Tibial artery (tissue), 4 donors: ENCODE measurements at regions of chr2 and their contacts with region 1.

Region 1: DNA sequence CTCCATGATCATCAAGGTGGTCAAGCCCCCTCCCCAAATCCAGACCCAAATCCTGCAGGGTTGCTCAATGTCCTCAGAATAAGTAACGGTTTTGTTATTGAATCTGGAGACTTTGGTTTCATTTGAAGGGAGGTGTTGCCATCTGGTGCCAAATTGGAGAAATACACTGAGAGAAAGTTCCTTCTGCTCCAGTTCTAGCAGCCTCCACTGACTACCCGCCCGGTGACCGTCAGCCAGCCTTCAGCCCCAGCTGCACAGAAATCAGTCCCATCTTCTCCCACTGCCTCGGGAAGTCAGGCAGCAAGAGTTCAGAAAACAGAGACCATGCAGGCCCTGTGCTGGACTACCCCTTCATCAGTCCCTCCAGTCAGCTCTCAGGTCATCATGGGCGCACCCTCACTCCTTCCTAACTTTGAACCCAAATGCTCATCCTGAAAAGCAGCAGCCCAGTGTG is 38.7 kb downstream of the PKDCC start:
- DNase-seq: peak in 1 of 2 donors; percentile 30
- H3K4me3 ChIP-seq: no peak overlapping the region
- H3K27ac ChIP-seq: no peak overlapping the region
- H3K4me1 ChIP-seq: peaks cover 5 to 27% (median 13%) of the 10 kb centered on the region in 4 donors
- H3K27me3 ChIP-seq: no peaks in the 10 kb centered on the region
- CTCF ChIP-seq: peak; percentile 78 to 95

Region 2: DNA sequence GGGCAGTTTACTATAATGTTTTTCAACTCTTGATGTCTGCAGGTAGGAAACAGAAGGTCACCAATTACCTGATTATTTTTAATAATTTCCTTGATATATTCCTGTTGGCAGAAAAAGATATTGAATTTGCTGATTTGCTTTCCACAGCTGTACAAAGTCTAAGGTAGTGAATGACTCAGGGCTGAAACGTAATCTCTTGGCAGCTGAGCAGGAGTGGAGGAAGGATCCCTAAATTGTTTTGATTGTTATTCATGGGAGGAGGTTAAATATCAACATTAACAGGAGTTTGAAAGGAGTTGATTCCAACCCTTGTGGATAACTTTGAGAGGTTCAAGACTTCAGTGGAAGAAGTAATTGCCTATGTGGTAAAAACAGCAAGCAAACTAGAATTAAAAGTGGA is 1289.4 kb before region 1 on chr2:
- intact Hi-C with region 1: no loop called
- DNase-seq: no peak
- H3K4me3 ChIP-seq: no peak overlapping the region
- H3K27ac ChIP-seq: no peak overlapping the region
- H3K4me1 ChIP-seq: no peaks in the 10 kb centered on the region
- H3K27me3 ChIP-seq: no peaks in the 10 kb centered on the region
- CTCF ChIP-seq: no peak

Region 3: DNA sequence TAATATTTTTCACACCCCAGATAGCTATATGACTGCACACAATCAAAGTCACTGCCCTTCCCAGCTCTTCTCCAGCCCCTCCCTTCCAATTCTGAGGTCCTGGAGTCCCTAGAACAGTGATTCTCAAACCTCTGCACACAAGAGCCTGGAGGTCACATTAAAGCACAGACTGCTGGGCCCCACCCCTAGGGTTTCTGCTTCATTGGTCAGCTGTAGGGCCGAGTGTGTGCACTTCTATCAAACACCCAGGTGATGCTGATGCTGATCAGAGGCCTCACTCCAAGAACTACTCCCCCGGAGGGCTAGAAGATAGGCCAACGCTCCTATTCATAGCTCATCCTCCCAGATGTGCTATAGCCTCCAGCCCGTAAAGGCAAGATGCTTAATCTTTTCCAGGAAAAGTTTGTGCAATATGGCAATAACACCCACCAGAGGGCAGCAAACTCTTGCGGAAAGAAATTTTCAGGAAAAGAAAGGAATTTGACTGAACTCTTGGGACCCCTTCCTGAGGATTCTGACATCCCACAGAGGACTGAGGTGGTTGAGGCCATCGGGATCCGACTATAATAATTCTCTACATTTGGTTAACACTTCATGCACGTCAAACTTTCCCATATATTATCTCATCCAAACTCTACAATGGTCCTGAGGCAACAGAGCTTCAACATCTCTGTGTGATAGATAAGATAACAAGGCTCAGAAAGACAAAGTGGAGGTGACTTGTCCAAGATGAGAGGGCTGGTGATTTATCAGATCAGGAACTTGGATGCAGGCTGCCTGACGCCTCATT is 232.9 kb before region 1 on chr2:
- intact Hi-C with region 1: loop called (anchors 5 kb)
- DNase-seq: no peak
- H3K4me3 ChIP-seq: no peak overlapping the region
- H3K27ac ChIP-seq: no peak overlapping the region
- H3K4me1 ChIP-seq: no peaks in the 10 kb centered on the region
- H3K27me3 ChIP-seq: peaks cover 0 to 2% of the 10 kb centered on the region in 2 donors
- CTCF ChIP-seq: peak; percentile 65 to 70

Region 4: DNA sequence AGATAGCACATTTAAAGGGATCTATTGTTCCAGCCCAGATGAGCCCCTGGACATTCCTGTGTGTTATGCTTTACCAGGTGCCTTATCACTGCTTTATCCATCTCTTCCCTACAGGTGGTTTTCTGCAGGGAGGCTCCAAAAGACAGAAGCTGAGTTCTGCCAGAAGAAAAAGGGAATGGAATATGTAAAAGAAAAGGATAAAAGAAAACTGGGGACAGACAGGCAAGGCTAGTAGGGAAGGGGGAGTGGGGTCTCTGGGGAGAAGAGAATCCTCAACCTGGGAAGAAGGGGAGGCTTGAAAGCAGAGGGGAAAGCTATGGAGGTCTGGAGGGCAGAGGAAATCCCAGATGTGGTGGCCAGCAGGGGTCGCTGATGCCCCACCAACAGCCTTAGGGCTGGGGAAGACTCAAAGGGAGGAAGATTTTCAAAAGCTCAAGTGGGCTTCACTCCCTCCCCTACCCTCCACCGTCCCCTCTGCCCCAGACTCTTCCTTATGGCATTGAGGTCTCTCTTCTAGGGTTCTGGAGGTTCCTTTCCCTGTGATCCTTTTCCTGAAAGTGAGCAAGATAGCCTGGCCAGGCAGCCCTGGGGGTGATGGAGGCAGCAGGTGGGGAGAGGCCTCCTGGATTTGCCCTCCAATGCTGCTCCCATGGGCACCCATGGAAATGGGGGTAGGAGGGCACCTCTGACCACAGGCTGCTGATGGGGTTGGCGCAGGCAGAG is 216.8 kb before region 1 on chr2:
- intact Hi-C with region 1: loop called (anchors 2 kb)
- DNase-seq: peak; percentile 59 to 87
- H3K4me3 ChIP-seq: no peak overlapping the region
- H3K27ac ChIP-seq: no peak overlapping the region
- H3K4me1 ChIP-seq: peaks cover 0 to 30% (median 0%) of the 10 kb centered on the region in 4 donors
- H3K27me3 ChIP-seq: no peaks in the 10 kb centered on the region
- CTCF ChIP-seq: peak; percentile 83 to 94